Thyroid gland (tissue), 4 donors: ENCODE measurements at regions of chr11 and their contacts with region 1.

Region 1: GRCh38 chr11:128290106-128290840 is 297.1 kb downstream of the ETS1 start:
- DNase-seq: peak; percentile 83 to 86
- H3K4me3 ChIP-seq: no peak overlapping the region
- H3K27ac ChIP-seq: peak overlapping the region; percentile 24 to 74 (median 57)
- H3K4me1 ChIP-seq: peaks cover 4 to 15% of the 10 kb centered on the region in 2 donors
- H3K27me3 ChIP-seq: no peaks in the 10 kb centered on the region
- CTCF ChIP-seq: peak; percentile 65 to 94 (median 85)
- POLR2A ChIP-seq: no peak

Region 2: GRCh38 chr11:128172046-128172878 is 118.0 kb before region 1 on chr11:
- intact Hi-C with region 1: loop called (anchors 5 kb)
- DNase-seq: peak; percentile 83 to 89
- H3K4me3 ChIP-seq: no peak overlapping the region
- H3K27ac ChIP-seq: no peak overlapping the region
- H3K4me1 ChIP-seq: no peaks in the 10 kb centered on the region
- H3K27me3 ChIP-seq: no peaks in the 10 kb centered on the region
- CTCF ChIP-seq: peak; percentile 58 to 89 (median 74)
- POLR2A ChIP-seq: no peak

Region 3: GRCh38 chr11:128453444-128454336 is 163.4 kb after region 1 on chr11:
- intact Hi-C with region 1: loop called (anchors 10 kb)
- DNase-seq: peak; percentile 71 to 74
- H3K4me3 ChIP-seq: no peak overlapping the region
- H3K27ac ChIP-seq: peak overlapping the region; percentile 37 to 89 (median 89)
- H3K4me1 ChIP-seq: peaks cover 25 to 28% of the 10 kb centered on the region in 2 donors
- H3K27me3 ChIP-seq: no peaks in the 10 kb centered on the region
- CTCF ChIP-seq: peak in 1 of 6 experiments; percentile 12
- POLR2A ChIP-seq: peak in 1 of 2 donors; percentile 32

Region 4: GRCh38 chr11:128548655-128549255 is 258.5 kb after region 1 on chr11:
- intact Hi-C with region 1: loop called (anchors 10 kb)
- DNase-seq: peak; percentile 29 to 39
- H3K4me3 ChIP-seq: peak overlapping the region in 2 of 3 donors; percentile 2 to 31
- H3K27ac ChIP-seq: peak overlapping the region; percentile 66 to 90 (median 69)
- H3K4me1 ChIP-seq: peaks cover 19 to 28% of the 10 kb centered on the region in 2 donors
- H3K27me3 ChIP-seq: no peaks in the 10 kb centered on the region
- CTCF ChIP-seq: no peak
- POLR2A ChIP-seq: no peak

Region 5: GRCh38 chr11:128630367-128631230 is 340.3 kb after region 1 on chr11:
- intact Hi-C with region 1: loop called (anchors 2 kb)
- DNase-seq: peak; percentile 82 to 90
- H3K4me3 ChIP-seq: no peak overlapping the region
- H3K27ac ChIP-seq: peak overlapping the region in 1 of 3 donors; percentile 10
- H3K4me1 ChIP-seq: peaks cover 0 to 10% of the 10 kb centered on the region in 2 donors
- H3K27me3 ChIP-seq: no peaks in the 10 kb centered on the region
- CTCF ChIP-seq: peak; percentile 72 to 93 (median 85)
- POLR2A ChIP-seq: no peak

Region 6: GRCh38 chr11:128831174-128832120 is 541.2 kb after region 1 on chr11:
- intact Hi-C with region 1: loop called (anchors 5 kb)
- DNase-seq: peak; percentile 79 to 84
- H3K4me3 ChIP-seq: no peak overlapping the region
- H3K27ac ChIP-seq: peak overlapping the region in 1 of 3 donors; percentile 11
- H3K4me1 ChIP-seq: peaks cover 0 to 3% of the 10 kb centered on the region in 2 donors
- H3K27me3 ChIP-seq: no peaks in the 10 kb centered on the region
- CTCF ChIP-seq: peak; percentile 72 to 89 (median 78)
- POLR2A ChIP-seq: no peak